Endothelial cell of umbilical vein (primary cell): ENCODE measurements at regions of chr1 and their contacts with region 1.

Region 1: GRCh38 chr1:1307908-1308755 is at the starts of genes ACAP3 and PUSL1:
- DNase-seq: peak; percentile 80
- H3K4me3 ChIP-seq: peak within 1 kb of the TSS; percentile 56 to 94 (median 66)
- H3K27ac ChIP-seq: peak within 1 kb of the TSS; percentile 65
- H3K4me1 ChIP-seq: peaks cover 15% of the 10 kb centered on the region
- H3K27me3 ChIP-seq: no peaks in the 10 kb centered on the region
- CTCF ChIP-seq: no peak
- POLR2A ChIP-seq: peak; percentile 44
- total RNA-seq, gene ACAP3: 39.0 and 43.0 TPM in 2 replicates
- total RNA-seq, gene PUSL1: 16.6 and 18.8 TPM in 2 replicates

Region 2: DNA sequence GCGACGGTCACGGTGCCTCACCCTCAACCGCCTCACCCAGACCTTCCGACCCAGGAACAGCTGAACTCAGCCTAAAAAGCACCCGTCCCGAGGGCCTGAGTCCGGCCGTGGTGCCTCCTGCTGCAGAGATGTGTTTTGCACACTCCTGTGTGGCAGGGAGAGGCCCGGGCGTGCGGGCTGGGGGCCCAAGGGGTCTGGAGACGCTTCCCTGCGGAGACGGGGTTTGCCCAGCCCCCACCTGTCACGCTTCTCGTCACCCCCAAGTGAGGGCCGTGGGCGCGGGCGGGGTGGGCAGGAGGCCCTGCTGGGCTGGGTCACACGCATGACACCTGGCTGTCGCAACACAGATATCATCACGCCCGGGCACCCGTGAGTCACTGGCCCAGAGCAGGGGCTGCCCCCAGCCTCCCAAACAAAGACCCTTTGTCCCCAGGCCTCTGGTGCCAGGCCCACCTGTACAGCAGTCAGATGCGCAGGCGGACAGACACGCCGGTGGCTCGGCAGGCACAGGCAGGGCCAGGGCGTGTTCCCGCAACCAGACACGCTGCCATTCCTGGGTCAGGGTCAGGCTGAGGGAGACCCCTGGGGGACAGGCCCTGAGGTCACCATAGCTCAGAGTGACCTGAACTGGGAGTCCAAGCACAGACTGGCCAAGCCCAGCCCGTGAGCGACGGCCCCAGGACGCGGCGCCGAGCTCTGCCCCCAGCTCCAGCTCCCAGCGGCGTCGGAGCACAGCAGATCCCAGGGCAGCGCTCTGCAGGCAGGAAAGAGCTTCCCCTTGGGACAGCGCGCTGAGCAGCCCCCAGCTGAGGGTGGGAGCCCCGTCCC is 70.0 kb before region 1 on chr1:
- CTCF ChIA-PET with region 1: no interaction called
- POLR2A ChIA-PET with region 1: no interaction called
- dilution Hi-C with region 1: no loop called
- intact Hi-C with region 1: no loop called
- DNase-seq: no peak
- H3K4me3 ChIP-seq: no peak overlapping the region
- H3K27ac ChIP-seq: no peak overlapping the region
- H3K4me1 ChIP-seq: no peaks in the 10 kb centered on the region
- H3K27me3 ChIP-seq: no peaks in the 10 kb centered on the region
- CTCF ChIP-seq: no peak
- POLR2A ChIP-seq: no peak

Region 3: GRCh38 chr1:1324521-1325287 is 16.6 kb after region 1 on chr1 and contains the starts of genes CPTP and INTS11:
- CTCF ChIA-PET with region 1: no interaction called
- POLR2A ChIA-PET with region 1: no interaction called
- dilution Hi-C with region 1: no loop called
- intact Hi-C with region 1: loop called (anchors 2 kb)
- DNase-seq: peak; percentile 89
- H3K4me3 ChIP-seq: peak within 1 kb of the TSS; percentile 71 to 97 (median 84)
- H3K27ac ChIP-seq: peak within 1 kb of the TSS; percentile 61
- H3K4me1 ChIP-seq: peaks cover 13% of the 10 kb centered on the region
- H3K27me3 ChIP-seq: no peaks in the 10 kb centered on the region
- CTCF ChIP-seq: no peak
- POLR2A ChIP-seq: peak; percentile 81
- total RNA-seq, gene CPTP: 25.1 and 29.5 TPM in 2 replicates
- total RNA-seq, gene INTS11: 127 and 132 TPM in 2 replicates

Region 4: DNA sequence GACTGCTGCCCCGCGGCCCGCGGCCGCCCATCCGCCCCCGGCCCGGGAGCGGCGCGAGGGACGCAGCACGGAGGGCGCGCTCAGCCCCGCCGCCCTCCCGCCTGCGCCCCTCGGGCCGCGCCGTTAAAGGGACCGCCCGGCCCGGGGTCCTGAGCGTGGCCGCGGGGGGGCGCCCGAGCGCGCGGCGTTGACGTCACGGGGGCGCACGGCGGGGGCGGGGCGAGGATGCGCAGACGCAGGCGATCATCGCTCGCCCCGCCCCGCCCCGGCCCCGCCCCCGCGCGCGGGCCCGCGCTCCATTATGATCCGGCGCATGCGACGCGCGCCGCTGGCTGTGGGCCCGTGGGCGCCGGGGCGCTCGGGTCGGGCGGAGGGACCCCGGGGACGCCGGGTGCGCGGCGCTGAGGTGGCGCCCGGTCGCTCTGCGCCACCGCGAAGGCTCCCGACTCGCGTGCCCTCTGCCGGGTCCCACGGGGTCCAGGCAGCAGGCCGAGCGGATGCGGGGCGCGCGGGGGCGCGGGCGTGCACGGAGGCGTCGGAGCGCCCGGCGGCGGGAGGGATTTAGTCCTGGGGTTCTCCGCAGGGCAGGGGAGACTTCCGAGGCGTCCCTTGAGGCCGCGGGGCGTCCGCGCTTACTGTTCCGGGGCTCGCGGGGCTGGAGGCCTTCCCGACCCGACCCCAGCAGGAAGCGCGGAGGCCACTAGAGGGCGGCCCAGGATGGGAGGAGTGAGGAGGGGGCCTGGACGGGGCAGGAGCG is 41.3 kb after region 1 on chr1 and contains the start of gene DVL1:
- CTCF ChIA-PET with region 1: no interaction called
- POLR2A ChIA-PET with region 1: no interaction called
- dilution Hi-C with region 1: no loop called
- intact Hi-C with region 1: loop called (anchors 1 kb)
- DNase-seq: peak; percentile 35
- H3K4me3 ChIP-seq: peak within 1 kb of the TSS; percentile 61 to 86 (median 79)
- H3K27ac ChIP-seq: peak within 1 kb of the TSS; percentile 53
- H3K4me1 ChIP-seq: peaks cover 10% of the 10 kb centered on the region
- H3K27me3 ChIP-seq: peaks cover 7 to 16% of the 10 kb centered on the region in 2 experiments
- CTCF ChIP-seq: peak; percentile 22 to 53
- POLR2A ChIP-seq: peak; percentile 67
- total RNA-seq, gene DVL1: 36.5 and 40.7 TPM in 2 replicates